CD4-positive, alpha-beta memory T cell (primary cell): ENCODE measurements at regions of chr14 and their contacts with region 1.

Region 1: GRCh38 chr14:31207755-31208545 is at the start of gene HECTD1:
- DNase-seq: peak; percentile 91 to 94 (median 92)
- H3K4me3 ChIP-seq: peak within 1 kb of the TSS; percentile 76 to 79
- H3K4me3 Mint-ChIP-seq: peak within 1 kb of the TSS; percentile 91 to 98 (median 95)
- H3K27ac ChIP-seq: peak within 1 kb of the TSS; percentile 97
- H3K27ac Mint-ChIP-seq: peak within 1 kb of the TSS; percentile 99 to 100 (median 99)
- H3K4me1 ChIP-seq: peaks cover 46% of the 10 kb centered on the region
- H3K4me1 Mint-ChIP-seq: peaks cover 43 to 77% (median 55%) of the 10 kb centered on the region in 4 donors
- H3K27me3 ChIP-seq: no peaks in the 10 kb centered on the region
- H3K27me3 Mint-ChIP-seq: no peaks in the 10 kb centered on the region
- total RNA-seq, gene HECTD1: 157 to 170 TPM

Region 2: DNA sequence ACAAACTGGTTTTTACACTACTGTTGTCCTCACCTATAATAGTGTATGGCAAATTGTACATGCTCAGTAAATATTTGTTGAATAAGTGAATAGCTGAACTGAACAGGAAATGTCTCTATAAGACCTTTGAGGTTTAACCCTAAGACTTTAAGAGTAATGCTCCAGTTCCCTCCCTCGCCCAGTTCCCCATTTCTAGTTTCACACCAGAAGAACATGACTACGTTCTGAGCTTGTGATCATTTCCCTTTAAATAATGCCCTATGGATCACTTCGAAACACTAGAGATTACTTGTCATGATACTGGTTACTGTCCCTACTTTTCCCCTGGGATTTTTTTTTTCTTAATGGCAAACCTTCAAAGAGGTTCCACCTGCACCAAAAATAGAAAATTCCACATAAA is 1349.7 kb before region 1 on chr14:
- CTCF ChIA-PET with region 1: no interaction called
- POLR2A ChIA-PET with region 1: no interaction called
- intact Hi-C with region 1: no loop called
- DNase-seq: no peak
- H3K4me3 ChIP-seq: no peak overlapping the region
- H3K4me3 Mint-ChIP-seq: no peak overlapping the region
- H3K27ac ChIP-seq: no peak overlapping the region
- H3K27ac Mint-ChIP-seq: no peak overlapping the region
- H3K4me1 ChIP-seq: no peaks in the 10 kb centered on the region
- H3K4me1 Mint-ChIP-seq: no peaks in the 10 kb centered on the region
- H3K27me3 ChIP-seq: no peaks in the 10 kb centered on the region
- H3K27me3 Mint-ChIP-seq: no peaks in the 10 kb centered on the region

Region 3: GRCh38 chr14:30621940-30622830 is 585.8 kb before region 1 on chr14 and contains the start of gene SCFD1:
- CTCF ChIA-PET with region 1: no interaction called
- POLR2A ChIA-PET with region 1: interaction called, 21 read pairs
- intact Hi-C with region 1: loop called (anchors 1 kb)
- DNase-seq: peak; percentile 88 to 93 (median 90)
- H3K4me3 ChIP-seq: peak within 1 kb of the TSS; percentile 74 to 97
- H3K4me3 Mint-ChIP-seq: peak within 1 kb of the TSS; percentile 93 to 99 (median 96)
- H3K27ac ChIP-seq: peak within 1 kb of the TSS; percentile 81
- H3K27ac Mint-ChIP-seq: peak within 1 kb of the TSS; percentile 96 to 99 (median 97)
- H3K4me1 ChIP-seq: peaks cover 52% of the 10 kb centered on the region
- H3K4me1 Mint-ChIP-seq: peaks cover 26 to 53% (median 40%) of the 10 kb centered on the region in 4 donors
- H3K27me3 ChIP-seq: no peaks in the 10 kb centered on the region
- H3K27me3 Mint-ChIP-seq: no peaks in the 10 kb centered on the region
- total RNA-seq, gene SCFD1: 58.1 to 72.6 TPM

Region 4: GRCh38 chr14:31122098-31122611 is 85.8 kb before region 1 on chr14:
- CTCF ChIA-PET with region 1: interaction called, 19 read pairs
- POLR2A ChIA-PET with region 1: interaction called, 152 read pairs
- intact Hi-C with region 1: loop called (anchors 1 kb)
- DNase-seq: no peak
- H3K4me3 ChIP-seq: no peak overlapping the region
- H3K4me3 Mint-ChIP-seq: no peak overlapping the region
- H3K27ac ChIP-seq: no peak overlapping the region
- H3K27ac Mint-ChIP-seq: peak overlapping the region in 1 of 7 donors; percentile 29
- H3K4me1 ChIP-seq: peaks cover 27% of the 10 kb centered on the region
- H3K4me1 Mint-ChIP-seq: peaks cover 21 to 26% (median 23%) of the 10 kb centered on the region in 4 donors
- H3K27me3 ChIP-seq: no peaks in the 10 kb centered on the region
- H3K27me3 Mint-ChIP-seq: no peaks in the 10 kb centered on the region

Region 5: DNA sequence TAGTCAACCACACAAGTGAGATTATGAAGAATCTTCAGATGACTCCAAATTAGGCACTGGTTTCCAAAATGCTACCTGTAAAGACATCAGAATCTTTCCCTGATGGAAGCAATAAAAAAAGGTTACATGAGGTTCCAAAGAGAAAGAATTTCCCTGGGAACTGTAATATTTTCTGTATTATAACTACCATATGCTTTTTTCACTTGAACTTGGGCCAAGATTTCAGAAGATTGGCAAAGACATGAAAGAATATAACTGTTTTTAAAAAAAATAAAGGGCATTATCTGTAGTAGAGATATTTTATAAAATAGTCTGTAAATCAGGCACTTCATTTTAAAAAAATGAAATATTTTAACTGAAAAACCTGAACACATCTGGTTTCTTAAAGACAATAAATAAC is 13.3 kb before region 1 on chr14:
- CTCF ChIA-PET with region 1: interaction called, 4 read pairs
- POLR2A ChIA-PET with region 1: interaction called, 11 read pairs
- intact Hi-C with region 1: no loop called
- DNase-seq: no peak
- H3K4me3 ChIP-seq: no peak overlapping the region
- H3K4me3 Mint-ChIP-seq: no peak overlapping the region
- H3K27ac ChIP-seq: no peak overlapping the region
- H3K27ac Mint-ChIP-seq: peak overlapping the region in 2 of 7 donors; percentile 27 to 48
- H3K4me1 ChIP-seq: peaks cover 35% of the 10 kb centered on the region
- H3K4me1 Mint-ChIP-seq: peaks cover 28 to 62% (median 45%) of the 10 kb centered on the region in 4 donors
- H3K27me3 ChIP-seq: no peaks in the 10 kb centered on the region
- H3K27me3 Mint-ChIP-seq: no peaks in the 10 kb centered on the region

Region 6: GRCh38 chr14:31326111-31326510 is 118.2 kb after region 1 on chr14:
- CTCF ChIA-PET with region 1: interaction called, 11 read pairs
- POLR2A ChIA-PET with region 1: interaction called, 5 read pairs
- intact Hi-C with region 1: loop called (anchors 5 kb)
- DNase-seq: peak; percentile 7 to 37 (median 20)
- H3K4me3 ChIP-seq: no peak overlapping the region
- H3K4me3 Mint-ChIP-seq: no peak overlapping the region
- H3K27ac ChIP-seq: no peak overlapping the region
- H3K27ac Mint-ChIP-seq: no peak overlapping the region
- H3K4me1 ChIP-seq: no peaks in the 10 kb centered on the region
- H3K4me1 Mint-ChIP-seq: peaks cover 0 to 2% (median under 1%) of the 10 kb centered on the region in 4 donors
- H3K27me3 ChIP-seq: no peaks in the 10 kb centered on the region
- H3K27me3 Mint-ChIP-seq: no peaks in the 10 kb centered on the region

Region 7: DNA sequence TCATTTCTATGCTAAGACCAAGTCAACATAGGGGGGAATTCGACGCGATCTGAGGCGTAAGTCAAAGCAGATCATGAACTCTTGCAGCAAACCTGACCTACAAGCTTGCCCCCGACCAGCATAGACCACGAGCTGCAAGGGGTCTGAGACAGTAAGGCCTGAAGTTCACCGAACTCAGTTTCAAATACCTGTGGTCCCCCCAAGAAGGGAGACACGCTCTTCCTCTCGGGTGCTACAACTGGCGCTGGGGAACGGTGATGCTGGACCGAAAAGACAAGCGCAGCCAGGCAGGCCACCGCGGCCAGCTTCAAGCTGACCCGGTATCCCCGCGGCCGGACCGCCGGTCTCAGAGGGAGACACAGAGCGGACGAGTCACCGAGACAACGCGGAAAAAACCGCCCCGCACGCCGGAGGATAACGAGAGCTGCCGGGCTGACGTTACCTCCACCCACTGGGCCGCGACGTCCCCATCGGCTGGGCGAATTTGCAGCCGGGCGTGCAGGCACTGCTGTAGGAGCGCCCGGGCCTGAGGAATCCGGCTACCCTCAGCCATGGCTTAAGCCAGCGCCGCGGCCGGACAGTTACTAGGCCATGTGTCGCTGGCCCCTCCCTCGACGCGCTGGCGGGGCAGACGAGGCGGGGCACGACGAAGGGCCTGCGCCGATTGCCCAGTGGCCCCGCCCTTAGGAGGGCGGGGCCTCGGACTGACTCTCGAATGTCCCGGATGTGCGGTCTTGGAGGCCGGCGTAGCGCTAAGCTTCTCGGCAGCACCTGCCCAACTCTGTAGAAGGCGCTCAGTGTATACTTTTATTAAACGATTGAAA is 249.1 kb after region 1 on chr14 and contains the start of gene DTD2:
- CTCF ChIA-PET with region 1: no interaction called
- POLR2A ChIA-PET with region 1: interaction called, 16 read pairs
- intact Hi-C with region 1: loop called (anchors 2 kb)
- DNase-seq: peak; percentile 87 to 88 (median 88)
- H3K4me3 ChIP-seq: peak within 1 kb of the TSS; percentile 53 to 69
- H3K4me3 Mint-ChIP-seq: peak within 1 kb of the TSS; percentile 96 to 99 (median 97)
- H3K27ac ChIP-seq: peak within 1 kb of the TSS; percentile 89
- H3K27ac Mint-ChIP-seq: peak within 1 kb of the TSS; percentile 86 to 98 (median 97)
- H3K4me1 ChIP-seq: peaks cover 13% of the 10 kb centered on the region
- H3K4me1 Mint-ChIP-seq: peaks cover 13 to 34% (median 26%) of the 10 kb centered on the region in 4 donors
- H3K27me3 ChIP-seq: no peaks in the 10 kb centered on the region
- H3K27me3 Mint-ChIP-seq: peaks cover 0 to 3% of the 10 kb centered on the region in 2 donors
- total RNA-seq, gene DTD2: 15.1 to 20.2 TPM